ENCODE measurements at regions of chr11 and their contacts with region 1.

Region 1: GRCh38 chr11:57426929-57427726 is at the start of gene SLC43A3:
- DNase-seq: peak; percentile 72
- ATAC-seq: peak; percentile 69
- H3K4me3 Mint-ChIP-seq: peak within 1 kb of the TSS; percentile 92
- H3K27ac Mint-ChIP-seq: peak within 1 kb of the TSS; percentile 91
- H3K4me1 Mint-ChIP-seq: peaks cover 47% of the 10 kb centered on the region
- H3K27me3 Mint-ChIP-seq: no peaks in the 10 kb centered on the region
- CTCF ChIP-seq: no peak
- total RNA-seq, gene SLC43A3: 213 and 237 TPM in 2 replicates

Region 2: GRCh38 chr11:57155838-57156607 is 271.1 kb before region 1 on chr11:
- CTCF ChIA-PET with region 1: no interaction called
- POLR2A ChIA-PET with region 1: no interaction called
- intact Hi-C with region 1: no loop called
- DNase-seq: no peak
- ATAC-seq: no peak
- H3K4me3 Mint-ChIP-seq: no peak overlapping the region
- H3K27ac Mint-ChIP-seq: no peak overlapping the region
- H3K4me1 Mint-ChIP-seq: no peaks in the 10 kb centered on the region
- H3K27me3 Mint-ChIP-seq: peaks cover 8% of the 10 kb centered on the region
- CTCF ChIP-seq: no peak

Region 3: DNA sequence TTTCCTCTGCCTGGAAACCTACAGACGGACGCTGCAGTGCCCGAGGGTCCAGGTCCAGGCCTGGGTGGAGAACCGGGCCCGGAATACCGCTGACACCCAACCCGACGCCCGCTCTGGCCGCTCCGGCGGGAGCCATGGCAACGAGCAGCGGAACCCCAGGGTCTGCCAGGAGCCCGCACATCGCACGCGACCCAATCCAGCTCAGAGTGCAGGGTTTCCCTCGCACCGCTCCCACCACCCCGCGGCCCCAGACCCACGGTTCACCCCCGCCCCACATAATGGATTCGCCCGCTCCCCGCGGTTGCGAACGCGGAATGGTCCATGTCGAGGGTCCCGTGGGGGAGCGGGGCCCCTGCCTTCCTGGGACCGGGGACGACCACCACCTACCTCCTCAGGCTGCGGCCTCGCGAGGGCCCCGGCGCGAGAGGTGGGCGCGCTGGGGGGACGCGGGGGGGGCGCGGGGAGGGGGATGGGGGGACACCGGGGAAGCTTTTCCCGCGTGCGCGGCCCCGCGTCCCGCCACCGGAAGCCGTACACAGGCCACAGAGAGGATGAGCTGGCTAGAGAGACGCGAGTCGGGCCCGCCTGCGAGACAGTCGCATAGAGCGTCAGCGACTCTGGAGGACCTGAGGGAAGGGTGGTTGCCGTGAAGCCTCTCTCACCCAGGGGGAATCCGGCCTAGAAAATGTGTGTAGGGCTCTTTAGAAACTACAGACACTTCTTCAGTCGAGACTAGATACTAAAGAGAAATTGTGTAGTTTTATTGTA is 91.6 kb before region 1 on chr11 and contains the start of gene SSRP1:
- CTCF ChIA-PET with region 1: no interaction called
- POLR2A ChIA-PET with region 1: interaction called, 11 read pairs
- intact Hi-C with region 1: no loop called
- DNase-seq: peak; percentile 77
- ATAC-seq: peak; percentile 97
- H3K4me3 Mint-ChIP-seq: peak within 1 kb of the TSS; percentile 94
- H3K27ac Mint-ChIP-seq: peak within 1 kb of the TSS; percentile 98
- H3K4me1 Mint-ChIP-seq: peaks cover 27% of the 10 kb centered on the region
- H3K27me3 Mint-ChIP-seq: peaks cover 2% of the 10 kb centered on the region
- CTCF ChIP-seq: no peak
- total RNA-seq, gene SSRP1: 120 and 127 TPM in 2 replicates

Region 4: GRCh38 chr11:57377107-57377506 is 50.0 kb before region 1 on chr11:
- CTCF ChIA-PET with region 1: no interaction called
- POLR2A ChIA-PET with region 1: no interaction called
- intact Hi-C with region 1: no loop called
- DNase-seq: no peak
- ATAC-seq: no peak
- H3K4me3 Mint-ChIP-seq: no peak overlapping the region
- H3K27ac Mint-ChIP-seq: no peak overlapping the region
- H3K4me1 Mint-ChIP-seq: no peaks in the 10 kb centered on the region
- H3K27me3 Mint-ChIP-seq: peaks cover 15% of the 10 kb centered on the region
- CTCF ChIP-seq: no peak

Region 5: GRCh38 chr11:57414612-57415212 is 12.4 kb before region 1 on chr11:
- CTCF ChIA-PET with region 1: no interaction called
- POLR2A ChIA-PET with region 1: interaction called, 238 read pairs
- intact Hi-C with region 1: no loop called
- DNase-seq: no peak
- ATAC-seq: no peak
- H3K4me3 Mint-ChIP-seq: no peak overlapping the region
- H3K27ac Mint-ChIP-seq: no peak overlapping the region
- H3K4me1 Mint-ChIP-seq: peaks cover 17% of the 10 kb centered on the region
- H3K27me3 Mint-ChIP-seq: no peaks in the 10 kb centered on the region
- CTCF ChIP-seq: no peak

Region 6: DNA sequence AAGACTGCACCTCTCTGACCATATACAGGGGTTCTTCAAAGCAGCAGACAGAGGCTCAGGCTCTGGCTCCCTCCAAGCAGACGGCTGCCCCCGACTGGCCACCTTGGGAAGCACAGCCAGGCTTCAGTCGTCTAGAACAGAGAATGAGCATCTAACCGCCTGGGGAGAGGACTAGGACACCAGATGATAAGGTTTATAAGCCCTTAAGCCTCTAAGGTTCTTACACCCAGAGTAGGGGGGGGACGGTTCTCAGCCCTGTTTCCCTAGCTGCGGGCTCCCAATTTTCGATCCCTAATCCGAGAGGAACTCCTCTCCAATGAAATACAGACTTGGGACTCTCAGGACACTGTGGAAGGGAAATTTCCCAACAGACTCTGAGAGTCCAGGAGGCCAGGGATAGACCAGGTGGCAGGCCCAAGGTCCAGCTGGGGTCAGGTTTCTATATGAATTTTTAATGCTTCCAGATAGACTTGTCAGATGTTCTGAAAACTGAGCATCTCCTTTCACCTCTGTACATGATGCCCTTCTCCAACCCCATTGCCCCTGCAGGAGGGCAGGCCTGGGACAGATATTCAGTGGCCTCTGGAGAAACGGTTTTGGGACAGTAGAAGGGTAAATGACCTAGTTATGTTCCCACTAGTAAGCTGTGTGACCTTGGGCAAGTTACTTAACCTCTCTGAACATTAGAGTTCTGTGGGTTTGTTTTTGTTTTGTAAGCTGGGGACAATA is 53.4 kb after region 1 on chr11:
- CTCF ChIA-PET with region 1: no interaction called
- POLR2A ChIA-PET with region 1: interaction called, 7 read pairs
- intact Hi-C with region 1: loop called (anchors 2 kb)
- DNase-seq: peak; percentile 47
- ATAC-seq: peak; percentile 29
- H3K4me3 Mint-ChIP-seq: no peak overlapping the region
- H3K27ac Mint-ChIP-seq: no peak overlapping the region
- H3K4me1 Mint-ChIP-seq: peaks cover 59% of the 10 kb centered on the region
- H3K27me3 Mint-ChIP-seq: peaks cover 7% of the 10 kb centered on the region
- CTCF ChIP-seq: no peak

Region 7: DNA sequence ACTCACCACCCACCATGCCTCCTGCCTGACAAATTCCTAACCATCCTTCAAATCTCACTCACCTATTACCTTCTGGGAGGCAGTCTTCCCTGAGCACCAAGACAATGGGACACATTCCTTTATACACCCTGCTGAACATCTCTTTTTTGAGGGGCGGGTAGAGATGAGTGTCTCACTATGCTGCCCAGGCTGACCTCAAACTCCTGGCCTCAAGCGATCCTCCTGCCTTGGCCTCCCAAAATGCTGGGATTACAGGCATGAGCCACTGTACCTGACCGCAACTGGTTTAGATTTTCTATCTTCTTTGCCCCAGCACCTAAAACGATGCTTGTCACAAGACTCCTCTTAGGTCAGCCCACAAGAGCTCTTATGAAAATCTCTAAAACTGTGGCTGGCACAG is 96.3 kb after region 1 on chr11:
- CTCF ChIA-PET with region 1: no interaction called
- POLR2A ChIA-PET with region 1: no interaction called
- intact Hi-C with region 1: no loop called
- DNase-seq: no peak
- ATAC-seq: no peak
- H3K4me3 Mint-ChIP-seq: no peak overlapping the region
- H3K27ac Mint-ChIP-seq: no peak overlapping the region
- H3K4me1 Mint-ChIP-seq: peaks cover 10% of the 10 kb centered on the region
- H3K27me3 Mint-ChIP-seq: no peaks in the 10 kb centered on the region
- CTCF ChIP-seq: no peak

Region 8: DNA sequence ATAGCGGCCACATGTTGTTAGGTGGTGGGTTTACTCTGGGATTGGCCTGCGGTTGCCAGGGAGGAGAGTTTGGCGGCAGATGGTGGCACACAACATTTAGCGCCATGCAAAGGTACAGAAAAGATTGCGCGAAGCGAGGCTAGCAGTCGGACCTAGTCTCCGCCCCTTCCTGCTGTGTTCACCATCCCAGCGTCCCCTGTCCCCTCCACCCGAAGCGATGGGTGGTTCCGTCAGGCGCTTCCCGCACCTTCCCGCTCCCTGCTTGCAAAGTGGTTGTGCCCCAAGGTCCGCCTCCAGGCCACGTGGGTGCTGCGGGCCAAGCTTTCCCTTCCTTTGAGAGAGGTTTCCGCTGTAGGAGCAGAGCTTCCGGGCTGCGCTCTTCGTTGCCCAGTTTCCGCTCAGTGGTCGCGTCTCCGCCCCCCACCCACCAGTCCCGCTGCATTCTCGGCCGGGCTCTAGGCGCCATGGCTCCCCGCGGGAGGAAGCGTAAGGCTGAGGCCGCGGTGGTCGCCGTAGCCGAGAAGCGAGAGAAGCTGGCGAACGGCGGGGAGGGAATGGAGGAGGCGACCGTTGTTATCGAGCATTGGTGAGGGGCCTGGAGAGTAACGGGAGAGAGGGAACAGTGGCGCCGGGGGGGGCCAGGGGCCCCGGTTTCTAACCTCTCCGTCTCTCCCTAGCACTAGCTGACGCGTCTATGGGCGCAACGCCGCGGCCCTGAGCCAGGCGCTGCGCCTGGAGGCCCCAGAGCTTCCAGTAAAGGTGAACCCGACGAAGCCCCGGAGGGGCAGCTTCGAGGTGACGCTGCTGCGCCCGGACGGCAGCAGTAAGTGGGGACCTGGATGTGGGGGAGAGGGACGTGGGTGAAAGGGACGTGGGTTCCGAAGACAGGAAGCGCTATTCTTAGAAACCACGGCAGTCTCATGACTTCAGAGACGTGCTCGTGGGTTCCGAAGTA is 314.3 kb after region 1 on chr11 and contains the start of gene SELENOH:
- CTCF ChIA-PET with region 1: no interaction called
- POLR2A ChIA-PET with region 1: interaction called, 6 read pairs
- intact Hi-C with region 1: loop called (anchors 2 kb)
- DNase-seq: peak; percentile 84
- ATAC-seq: peak; percentile 90
- H3K4me3 Mint-ChIP-seq: peak within 1 kb of the TSS; percentile 96
- H3K27ac Mint-ChIP-seq: peak within 1 kb of the TSS; percentile 98
- H3K4me1 Mint-ChIP-seq: peaks cover 30% of the 10 kb centered on the region
- H3K27me3 Mint-ChIP-seq: no peaks in the 10 kb centered on the region
- CTCF ChIP-seq: no peak
- total RNA-seq, gene SELENOH: 210 and 224 TPM in 2 replicates

Region 9: GRCh38 chr11:58406774-58407173 is 979.6 kb after region 1 on chr11 and contains the start of gene OR5B3:
- CTCF ChIA-PET with region 1: no interaction called
- POLR2A ChIA-PET with region 1: no interaction called
- intact Hi-C with region 1: no loop called
- DNase-seq: no peak
- ATAC-seq: no peak
- H3K4me3 Mint-ChIP-seq: no peak within 1 kb of the TSS
- H3K27ac Mint-ChIP-seq: no peak within 1 kb of the TSS
- H3K4me1 Mint-ChIP-seq: no peaks in the 10 kb centered on the region
- H3K27me3 Mint-ChIP-seq: peaks cover 11% of the 10 kb centered on the region
- CTCF ChIP-seq: no peak
- total RNA-seq, gene OR5B3: not detected in 2 replicates

Measured in activated B cell treated with CpG ODN at 0.5 μM for 24 hours (primary cell).